AG04449 (cell line): ENCODE measurements at regions of chr6 and their contacts with region 1.

Region 1: GRCh38 chr6:7424967-7425807 is 35.6 kb downstream of the RIOK1 start:
- DNase-seq: no peak
- H3K4me3 ChIP-seq: no peak overlapping the region
- CTCF ChIP-seq: peak; percentile 43

Region 2: GRCh38 chr6:7568021-7568420 is 142.8 kb after region 1 on chr6:
- CTCF ChIA-PET with region 1: interaction called, 20 read pairs
- POLR2A ChIA-PET with region 1: no interaction called
- DNase-seq: peak; percentile 92
- H3K4me3 ChIP-seq: no peak overlapping the region
- CTCF ChIP-seq: no peak

Region 3: GRCh38 chr6:7589949-7590917 is 165.0 kb after region 1 on chr6 and contains the start of gene SNRNP48:
- CTCF ChIA-PET with region 1: interaction called, 26 read pairs
- POLR2A ChIA-PET with region 1: interaction called, 3 read pairs
- DNase-seq: peak; percentile 54
- H3K4me3 ChIP-seq: peak within 1 kb of the TSS; percentile 81
- CTCF ChIP-seq: no peak